Naive thymus-derived CD4-positive, alpha-beta T cell (primary cell): ENCODE measurements at regions of chr20 and their contacts with region 1.

Region 1: GRCh38 chr20:49610701-49611538 is 43.0 kb upstream of the PTGIS start:
- DNase-seq: peak; percentile 26 to 85 (median 61)
- ATAC-seq: peak; percentile 84
- H3K4me3 ChIP-seq: no peak overlapping the region
- H3K4me3 Mint-ChIP-seq: peak overlapping the region in 8 of 10 donors; percentile 23 to 75 (median 43)
- H3K27ac ChIP-seq: no peak overlapping the region
- H3K27ac Mint-ChIP-seq: peak overlapping the region in 1 of 9 donors; percentile 74
- H3K4me1 ChIP-seq: peaks cover 4 to 11% of the 10 kb centered on the region in 2 donors
- H3K4me1 Mint-ChIP-seq: peaks cover 7 to 28% (median 15%) of the 10 kb centered on the region in 7 donors
- H3K27me3 ChIP-seq: no peaks in the 10 kb centered on the region
- H3K27me3 Mint-ChIP-seq: peaks cover 0 to 10% (median 9%) of the 10 kb centered on the region in 5 donors

Region 2: DNA sequence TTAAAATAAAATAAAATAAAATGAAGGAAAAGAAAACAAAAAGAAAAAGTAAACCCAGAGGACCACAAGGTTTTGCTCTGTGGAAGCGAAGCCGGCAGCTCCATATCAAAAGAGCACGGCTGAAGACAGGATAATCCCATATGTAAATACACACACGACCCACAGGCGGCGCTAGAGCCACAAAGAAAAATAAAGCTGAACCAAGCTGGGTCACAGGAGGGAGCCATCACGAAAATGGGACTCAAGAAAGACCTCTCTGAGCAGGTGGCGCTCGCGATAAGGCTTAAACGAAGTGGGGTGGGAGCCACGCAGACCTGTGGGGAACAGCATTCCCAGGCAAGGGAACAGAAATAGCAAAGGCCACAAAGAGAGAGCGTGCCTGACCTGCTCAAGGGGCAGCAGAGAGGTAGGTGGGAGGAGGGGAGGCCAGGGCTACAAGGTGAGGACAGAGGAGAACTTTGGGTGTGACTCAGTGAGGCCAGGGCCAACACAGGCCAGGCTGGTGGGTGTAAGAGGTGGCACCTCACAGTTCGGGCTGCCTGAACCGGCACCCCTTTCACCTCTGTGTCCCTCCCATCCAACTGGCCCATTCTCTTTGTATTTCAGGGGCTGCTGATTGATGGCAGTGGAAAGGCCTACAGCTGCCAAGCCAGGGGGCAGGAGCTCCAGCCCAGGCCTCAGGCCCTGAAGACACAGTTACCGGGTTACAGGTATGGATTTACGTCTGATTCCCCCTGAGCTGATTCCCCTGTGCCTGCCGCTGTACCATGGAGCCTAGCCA is 69.0 kb before region 1 on chr20:
- CTCF ChIA-PET with region 1: interaction called, 4 read pairs
- POLR2A ChIA-PET with region 1: no interaction called
- intact Hi-C with region 1: loop called (anchors 1 kb)
- DNase-seq: peak in 8 of 9 donors; percentile 1 to 66 (median 16)
- ATAC-seq: peak; percentile 72
- H3K4me3 ChIP-seq: no peak overlapping the region
- H3K4me3 Mint-ChIP-seq: peak overlapping the region in 1 of 10 donors; percentile 53
- H3K27ac ChIP-seq: no peak overlapping the region
- H3K27ac Mint-ChIP-seq: peak overlapping the region in 1 of 9 donors; percentile 82
- H3K4me1 ChIP-seq: no peaks in the 10 kb centered on the region
- H3K4me1 Mint-ChIP-seq: peaks cover 0 to 32% (median 0%) of the 10 kb centered on the region in 7 donors
- H3K27me3 ChIP-seq: no peaks in the 10 kb centered on the region
- H3K27me3 Mint-ChIP-seq: peaks cover 2 to 15% (median 8%) of the 10 kb centered on the region in 5 donors

Region 3: DNA sequence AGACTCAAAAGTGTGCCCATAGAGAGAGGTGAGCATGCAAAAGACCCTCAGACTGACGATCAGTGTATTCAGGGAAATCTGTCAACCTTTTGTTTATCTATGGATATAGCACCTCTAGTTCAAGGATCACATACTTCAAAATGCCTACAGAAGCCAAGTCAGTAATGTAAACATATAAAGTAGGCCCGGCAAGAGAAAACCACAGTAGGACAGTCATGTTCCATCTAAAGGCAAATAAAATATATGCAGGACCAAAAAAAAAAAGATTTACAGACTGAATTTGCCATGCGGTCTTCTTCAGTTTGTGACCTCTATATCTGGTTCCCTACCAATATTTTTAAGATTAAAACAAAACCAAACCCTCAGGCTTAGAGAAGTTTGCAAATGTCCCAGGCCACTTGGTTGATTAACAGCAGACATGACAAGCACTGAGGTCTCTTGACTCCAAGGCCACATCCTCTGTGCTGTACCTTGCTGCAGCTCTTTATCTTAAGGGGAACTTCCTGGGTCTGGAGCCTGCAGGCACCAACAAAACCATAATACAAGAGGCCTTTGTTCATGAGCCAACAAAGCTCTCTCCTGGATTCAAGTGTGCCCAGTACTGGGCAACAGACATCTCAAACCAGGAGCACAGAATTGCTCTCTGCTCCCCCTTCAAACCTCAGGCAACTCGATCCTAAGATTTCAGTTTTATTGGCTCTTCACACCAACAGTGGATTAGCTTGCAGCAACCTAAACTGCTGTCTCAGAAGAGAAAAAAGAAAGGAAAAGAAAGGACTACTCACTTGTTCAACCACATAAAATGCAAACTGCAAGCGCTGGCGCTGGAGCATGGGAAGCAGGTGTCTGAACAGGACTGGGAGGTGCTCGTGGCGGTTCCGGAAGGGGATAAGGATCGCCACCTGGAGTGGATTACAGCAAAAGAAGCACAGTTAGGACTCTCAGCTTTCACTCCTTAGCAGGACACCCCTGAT is 31.1 kb after region 1 on chr20:
- CTCF ChIA-PET with region 1: no interaction called
- POLR2A ChIA-PET with region 1: no interaction called
- intact Hi-C with region 1: no loop called
- DNase-seq: no peak
- ATAC-seq: no peak
- H3K4me3 ChIP-seq: no peak overlapping the region
- H3K4me3 Mint-ChIP-seq: peak overlapping the region in 1 of 10 donors; percentile 14
- H3K27ac ChIP-seq: no peak overlapping the region
- H3K27ac Mint-ChIP-seq: peak overlapping the region in 2 of 9 donors; percentile 59 to 79
- H3K4me1 ChIP-seq: no peaks in the 10 kb centered on the region
- H3K4me1 Mint-ChIP-seq: peaks cover 0 to 20% (median 0%) of the 10 kb centered on the region in 7 donors
- H3K27me3 ChIP-seq: no peaks in the 10 kb centered on the region
- H3K27me3 Mint-ChIP-seq: no peaks in the 10 kb centered on the region

Region 4: GRCh38 chr20:49713753-49714712 is 103.1 kb after region 1 on chr20 and contains the start of gene B4GALT5:
- CTCF ChIA-PET with region 1: no interaction called
- POLR2A ChIA-PET with region 1: no interaction called
- intact Hi-C with region 1: loop called in 1 of 2 experiments (anchors 1 kb)
- DNase-seq: peak in 8 of 9 donors; percentile 26 to 82 (median 47)
- ATAC-seq: peak; percentile 90
- H3K4me3 ChIP-seq: peak within 1 kb of the TSS; percentile 67
- H3K4me3 Mint-ChIP-seq: peak within 1 kb of the TSS; percentile 86 to 93 (median 90)
- H3K27ac ChIP-seq: peak within 1 kb of the TSS; percentile 66
- H3K27ac Mint-ChIP-seq: peak within 1 kb of the TSS; percentile 53 to 89 (median 81)
- H3K4me1 ChIP-seq: peaks cover 7 to 15% of the 10 kb centered on the region in 2 donors
- H3K4me1 Mint-ChIP-seq: peaks cover 26 to 43% (median 38%) of the 10 kb centered on the region in 7 donors
- H3K27me3 ChIP-seq: no peaks in the 10 kb centered on the region
- H3K27me3 Mint-ChIP-seq: peaks cover 0 to 4% (median 0%) of the 10 kb centered on the region in 5 donors
- total RNA-seq, gene B4GALT5: 3.3 to 23.1 (median 4.6) TPM

Region 5: GRCh38 chr20:49888345-49888966 is 277.5 kb after region 1 on chr20:
- CTCF ChIA-PET with region 1: no interaction called
- POLR2A ChIA-PET with region 1: no interaction called
- intact Hi-C with region 1: loop called (anchors 1 kb)
- DNase-seq: peak; percentile 24 to 58 (median 39)
- ATAC-seq: peak; percentile 48
- H3K4me3 ChIP-seq: no peak overlapping the region
- H3K4me3 Mint-ChIP-seq: no peak overlapping the region
- H3K27ac ChIP-seq: no peak overlapping the region
- H3K27ac Mint-ChIP-seq: peak overlapping the region in 5 of 9 donors; percentile 5 to 38 (median 19)
- H3K4me1 ChIP-seq: no peaks in the 10 kb centered on the region
- H3K4me1 Mint-ChIP-seq: peaks cover 0 to 26% (median 5%) of the 10 kb centered on the region in 7 donors
- H3K27me3 ChIP-seq: no peaks in the 10 kb centered on the region
- H3K27me3 Mint-ChIP-seq: no peaks in the 10 kb centered on the region